ENCODE measurements at regions of chrX and their contacts with region 1.

Region 1: GRCh38 chrX:70664726-70665125 is 220.1 kb downstream of the DLG3 start:
- DNase-seq: peak; percentile 24
- CTCF ChIP-seq: no peak

Region 2: DNA sequence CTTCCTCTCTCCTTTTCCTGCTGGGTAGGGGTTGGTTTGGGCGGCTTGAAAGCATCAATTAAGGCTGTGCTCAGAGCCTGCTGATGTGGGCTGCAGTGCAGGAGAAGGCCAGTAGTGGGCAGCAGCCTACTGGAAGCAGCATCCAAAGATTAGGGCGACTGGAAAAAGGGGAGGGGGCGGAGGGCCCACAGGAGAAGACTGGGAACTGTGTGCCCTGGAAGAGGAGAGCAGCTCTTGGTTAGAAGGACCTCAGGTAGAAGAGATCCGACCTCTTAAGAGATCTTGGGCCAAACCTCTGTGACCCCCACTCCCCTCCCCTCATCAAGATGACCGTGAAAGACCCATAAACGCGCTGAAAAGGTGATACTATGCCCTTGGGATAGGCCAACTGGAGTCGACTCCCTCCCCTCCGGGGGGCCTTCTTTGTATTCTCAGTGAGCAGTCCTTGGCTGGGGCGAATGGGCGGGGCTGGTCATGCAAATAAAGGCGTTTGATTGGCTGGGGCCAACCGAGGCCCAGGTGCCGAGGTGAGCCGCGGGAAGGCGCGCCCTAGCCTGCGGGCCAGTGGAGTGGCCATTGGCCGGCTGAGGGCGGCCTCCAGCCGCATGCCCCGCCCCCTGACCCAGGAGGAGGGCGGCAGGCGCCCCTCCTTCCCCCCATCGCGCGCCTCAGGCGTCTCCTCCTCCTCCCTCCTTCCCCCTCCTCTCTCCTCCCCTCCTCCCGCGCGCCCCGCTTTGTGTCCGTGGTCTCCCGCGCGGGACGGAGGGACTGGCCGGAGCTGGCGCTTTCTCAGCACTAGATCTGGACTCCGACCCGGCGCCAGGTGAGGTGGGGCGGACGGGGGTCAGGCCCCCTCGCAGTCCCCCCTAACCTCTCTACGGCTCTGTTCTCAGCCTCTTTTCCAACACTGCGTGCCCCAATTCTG is 210.0 kb before region 1 on chrX:
- in situ Hi-C with region 1: loop called (anchors 25 kb)
- DNase-seq: peak; percentile 64
- CTCF ChIP-seq: peak; percentile 87

Measured in GM13976 (cell line).